Sciatic nerve (tissue), 2 donors: ENCODE measurements at regions of chr4 and their contacts with region 1.

Region 1: DNA sequence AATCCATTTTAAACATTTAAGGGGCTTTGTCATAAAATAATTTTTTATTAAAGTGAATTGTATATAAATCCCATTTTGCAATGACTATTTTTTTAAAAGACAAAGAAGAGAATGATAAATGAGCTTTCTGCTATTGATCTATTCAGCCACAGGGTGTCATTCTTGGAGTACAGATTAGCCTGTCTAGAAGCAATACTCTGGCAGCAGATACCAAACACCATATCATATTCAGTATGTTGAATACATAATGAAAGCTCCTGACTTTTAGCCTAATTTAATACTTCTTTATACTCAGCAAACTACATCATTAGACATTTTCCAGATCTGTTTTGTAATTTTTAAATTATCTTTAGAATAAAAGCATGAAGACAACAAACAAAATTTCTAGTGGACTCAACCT is 496.3 kb downstream of the PDGFC start:
- DNase-seq: no peak
- ATAC-seq: peak; percentile 81

Region 2: DNA sequence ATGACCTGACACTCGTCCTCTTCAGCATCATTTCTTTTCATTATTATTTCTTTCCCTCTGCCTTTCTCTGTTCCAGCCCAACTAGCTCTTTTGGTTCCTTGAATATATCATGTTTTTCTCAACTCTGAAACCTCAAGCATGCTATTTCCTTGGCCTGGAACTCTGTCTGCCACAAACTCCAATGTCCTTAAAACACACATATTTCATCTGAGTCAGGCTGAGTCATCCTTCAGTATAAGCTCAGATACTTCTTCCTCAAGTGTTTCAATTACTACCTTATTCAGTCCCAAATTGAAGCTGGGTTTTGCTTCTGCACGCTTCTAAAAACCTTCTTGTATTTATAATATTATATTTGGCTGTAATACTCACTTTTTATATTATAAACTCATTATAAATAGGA is 72.1 kb after region 1 on chr4:
- intact Hi-C with region 1: no loop called
- DNase-seq: no peak
- ATAC-seq: no peak

Region 3: GRCh38 chr4:157035471-157035870 is 560.1 kb after region 1 on chr4:
- intact Hi-C with region 1: loop called (anchors 5 kb)
- DNase-seq: no peak
- ATAC-seq: no peak